H1 (cell line): ENCODE measurements at regions of chr5 and their contacts with region 1.

Region 1: DNA sequence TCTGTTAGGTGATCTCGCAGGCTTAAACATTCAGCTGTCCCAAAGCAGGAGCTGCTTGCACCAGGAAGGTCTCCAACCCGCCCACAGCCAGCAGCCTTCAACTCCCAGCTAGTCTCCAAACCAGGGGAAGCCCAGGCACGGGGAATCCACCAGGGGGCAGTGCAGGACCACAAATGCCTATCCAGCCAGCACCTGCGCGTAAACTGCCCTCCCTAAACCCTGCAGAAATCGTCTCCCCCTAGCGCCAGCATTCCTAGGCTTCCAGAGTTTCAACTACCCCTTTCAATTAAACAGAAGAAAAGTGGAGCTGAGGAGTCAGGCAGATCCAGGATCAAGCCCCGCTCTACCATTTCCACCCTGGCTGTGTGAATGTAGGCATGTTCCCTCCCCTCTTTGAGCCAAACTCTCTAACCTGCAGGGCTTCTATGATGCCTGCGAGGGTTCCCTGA is 72.0 kb downstream of the HRH2 start:
- DNase-seq: peak; percentile 97 to 100
- H3K4me3 ChIP-seq: peak overlapping the region; percentile 27 to 57 (median 44); a peak in 7 of 8 replicates
- H3K27ac ChIP-seq: no peak overlapping the region
- H3K4me1 ChIP-seq: peaks cover 0 to 13% (median 7%) of the 10 kb centered on the region in 4 experiments; a peak in 6 of 7 replicates
- H3K27me3 ChIP-seq: no peaks in the 10 kb centered on the region; a peak in 2 of 7 replicates
- CTCF ChIP-seq: peak in 2 of 3 experiments; percentile 99 to 100; a peak in 3 of 4 replicates
- EP300 ChIP-seq: peak in 1 of 2 experiments; percentile 66; a peak in 1 of 3 replicates
- POLR2A ChIP-seq: no peak
- RAD21 ChIP-seq: peak; percentile 100

Region 2: DNA sequence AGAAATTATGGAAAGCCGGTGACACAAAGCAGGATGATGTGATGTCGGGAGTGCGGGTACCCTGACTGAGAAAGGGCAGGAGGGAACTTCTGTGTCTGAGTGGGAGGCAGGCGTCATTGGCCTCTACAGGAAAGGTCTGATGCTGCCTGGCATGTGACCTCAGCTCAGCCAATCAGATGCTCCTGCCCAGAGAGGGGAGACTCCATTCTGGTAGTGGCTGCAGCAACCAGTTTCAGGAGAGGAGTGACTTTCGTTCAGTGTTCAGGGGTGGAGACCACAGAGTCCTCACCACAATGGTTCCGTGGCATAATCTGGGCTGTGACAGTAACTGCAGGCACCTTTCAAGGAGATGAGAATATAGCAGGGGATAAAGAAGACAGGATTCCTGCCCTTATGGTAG is 258.2 kb before region 1 on chr5:
- CTCF ChIA-PET with region 1: no interaction called
- POLR2A ChIA-PET with region 1: no interaction called
- DNase-seq: no peak
- H3K4me3 ChIP-seq: no peak overlapping the region
- H3K27ac ChIP-seq: no peak overlapping the region
- H3K4me1 ChIP-seq: no peaks in the 10 kb centered on the region
- H3K27me3 ChIP-seq: no peaks in the 10 kb centered on the region
- CTCF ChIP-seq: no peak
- EP300 ChIP-seq: no peak
- POLR2A ChIP-seq: no peak
- RAD21 ChIP-seq: no peak

Region 3: GRCh38 chr5:175689147-175689991 is 40.5 kb before region 1 on chr5:
- CTCF ChIA-PET with region 1: interaction called, 12 read pairs
- POLR2A ChIA-PET with region 1: no interaction called
- DNase-seq: no peak
- H3K4me3 ChIP-seq: no peak overlapping the region
- H3K27ac ChIP-seq: no peak overlapping the region
- H3K4me1 ChIP-seq: peaks cover 0 to 8% (median 3%) of the 10 kb centered on the region in 4 experiments; a peak in 3 of 7 replicates
- H3K27me3 ChIP-seq: no peaks in the 10 kb centered on the region
- CTCF ChIP-seq: no peak
- EP300 ChIP-seq: no peak
- POLR2A ChIP-seq: no peak
- RAD21 ChIP-seq: no peak

Region 4: GRCh38 chr5:175746851-175747250 is 17.0 kb after region 1 on chr5:
- CTCF ChIA-PET with region 1: interaction called, 43 read pairs
- POLR2A ChIA-PET with region 1: no interaction called
- DNase-seq: no peak
- H3K4me3 ChIP-seq: peak overlapping the region in 1 of 4 experiments; percentile 37; a peak in 2 of 8 replicates
- H3K27ac ChIP-seq: no peak overlapping the region
- H3K4me1 ChIP-seq: peaks cover 0 to 3% (median 2%) of the 10 kb centered on the region in 4 experiments; a peak in 2 of 7 replicates
- H3K27me3 ChIP-seq: 0 out of 7 replicates have a peak, but pooled peaks cover 0 to 2% (median 0%) of the 10 kb centered on the region in 4 experiments
- CTCF ChIP-seq: no peak
- EP300 ChIP-seq: no peak
- POLR2A ChIP-seq: no peak
- RAD21 ChIP-seq: no peak

Region 5: GRCh38 chr5:175809531-175810121 is 79.8 kb after region 1 on chr5:
- CTCF ChIA-PET with region 1: interaction called, 18 read pairs
- POLR2A ChIA-PET with region 1: no interaction called
- DNase-seq: no peak
- H3K4me3 ChIP-seq: no peak overlapping the region
- H3K27ac ChIP-seq: no peak overlapping the region
- H3K4me1 ChIP-seq: peaks cover 0 to 7% (median 4%) of the 10 kb centered on the region in 4 experiments; a peak in 2 of 7 replicates
- H3K27me3 ChIP-seq: no peaks in the 10 kb centered on the region
- CTCF ChIP-seq: no peak
- EP300 ChIP-seq: no peak
- POLR2A ChIP-seq: no peak
- RAD21 ChIP-seq: no peak

Region 6: DNA sequence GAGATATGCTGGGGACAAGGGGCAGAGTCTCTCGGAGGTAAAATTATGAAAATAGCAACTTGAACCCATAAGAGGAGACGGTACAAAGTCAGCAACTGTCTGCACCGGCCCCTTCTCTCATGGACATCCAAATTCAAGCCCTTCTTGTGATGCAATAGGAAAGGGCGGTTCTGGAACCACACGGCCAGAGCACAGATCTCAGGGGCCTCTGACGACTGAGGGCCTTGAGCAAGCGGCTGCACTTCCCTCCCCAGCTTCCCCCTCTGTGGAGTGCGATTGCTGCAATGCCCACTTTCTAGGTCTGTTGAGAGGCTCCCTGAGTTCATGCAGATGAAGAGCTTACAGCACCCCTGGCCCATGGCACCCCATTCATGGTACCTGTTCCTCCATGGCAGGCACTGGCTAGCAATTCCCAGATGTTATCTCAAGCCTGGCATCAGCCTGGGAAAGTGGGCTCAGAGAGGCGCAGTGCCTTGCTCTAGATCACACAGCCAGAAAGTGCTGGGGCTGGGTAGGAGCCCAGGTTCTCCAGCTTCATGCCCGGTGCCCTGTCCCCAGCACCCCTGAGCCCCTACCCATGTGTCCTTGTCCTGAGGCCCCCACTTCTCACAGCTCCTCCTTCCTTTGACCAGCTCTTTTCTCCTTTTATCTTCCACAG is 123.8 kb after region 1 on chr5:
- CTCF ChIA-PET with region 1: interaction called, 25 read pairs
- POLR2A ChIA-PET with region 1: no interaction called
- DNase-seq: no peak
- H3K4me3 ChIP-seq: no peak overlapping the region
- H3K27ac ChIP-seq: no peak overlapping the region
- H3K4me1 ChIP-seq: peaks cover 0 to 6% (median 1%) of the 10 kb centered on the region in 4 experiments; a peak in 4 of 7 replicates
- H3K27me3 ChIP-seq: no peaks in the 10 kb centered on the region
- CTCF ChIP-seq: no peak
- EP300 ChIP-seq: no peak
- POLR2A ChIP-seq: no peak
- RAD21 ChIP-seq: no peak

Region 7: DNA sequence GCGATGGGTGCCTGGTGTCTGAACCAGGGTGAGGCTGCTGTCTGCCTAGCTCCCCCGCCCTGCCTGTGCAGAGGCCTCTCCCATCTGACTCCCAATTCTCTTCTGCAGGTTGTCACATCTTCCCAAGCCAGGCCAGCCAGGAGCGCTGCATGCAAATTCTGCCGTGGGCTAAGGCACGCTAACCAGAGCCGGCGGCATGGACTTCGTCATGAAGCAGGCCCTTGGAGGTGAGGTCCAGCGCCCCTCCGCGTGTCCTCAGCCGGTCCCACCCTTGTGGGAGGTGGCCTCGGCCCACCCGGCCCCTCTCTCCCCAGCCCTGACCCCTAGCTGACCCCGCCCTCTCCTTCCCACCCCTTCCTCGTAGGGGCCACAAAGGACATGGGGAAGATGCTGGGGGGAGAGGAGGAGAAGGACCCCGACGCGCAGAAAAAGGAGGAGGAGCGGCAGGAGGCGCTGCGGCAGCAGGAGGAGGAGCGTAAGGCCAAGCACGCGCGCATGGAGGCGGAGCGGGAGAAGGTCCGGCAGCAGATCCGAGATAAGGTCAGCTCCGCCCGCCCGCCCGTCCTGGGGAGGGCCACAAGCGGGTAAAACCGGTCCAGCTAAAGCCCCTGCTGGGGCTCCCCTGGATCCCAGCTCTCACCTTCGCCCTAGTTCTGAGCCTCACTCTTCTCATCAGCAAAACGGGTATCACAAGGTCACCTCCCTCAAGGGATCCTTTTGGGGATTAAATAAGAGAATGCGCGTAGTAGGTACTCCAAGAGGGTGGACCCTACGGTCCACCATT is 148.9 kb after region 1 on chr5:
- CTCF ChIA-PET with region 1: interaction called, 65 read pairs
- POLR2A ChIA-PET with region 1: interaction called, 3 read pairs
- DNase-seq: peak in 1 of 2 experiments; percentile 71
- H3K4me3 ChIP-seq: peak overlapping the region in 3 of 4 experiments; percentile 8 to 46 (median 23); a peak in 5 of 8 replicates
- H3K27ac ChIP-seq: no peak overlapping the region
- H3K4me1 ChIP-seq: peaks cover 0 to 16% (median 2%) of the 10 kb centered on the region in 4 experiments; a peak in 6 of 7 replicates
- H3K27me3 ChIP-seq: peaks cover 0 to 6% (median 1%) of the 10 kb centered on the region in 4 experiments; a peak in 3 of 7 replicates
- CTCF ChIP-seq: peak; percentile 13 to 38 (median 15); a peak in 3 of 4 replicates
- EP300 ChIP-seq: no peak
- POLR2A ChIP-seq: no peak
- RAD21 ChIP-seq: peak in 1 of 2 experiments; percentile 15; a peak in 1 of 4 replicates